ENCODE measurements at regions of chr9 and their contacts with region 1.

Region 1: GRCh38 chr9:30065883-30066282 is 2318.6 kb upstream of the ACO1 start:
- DNase-seq: no peak
- ATAC-seq: no peak
- H3K4me3 ChIP-seq: no peak overlapping the region
- H3K4me3 Mint-ChIP-seq: no peak overlapping the region
- H3K27ac ChIP-seq: no peak overlapping the region
- H3K27ac Mint-ChIP-seq: no peak overlapping the region
- H3K4me1 ChIP-seq: no peaks in the 10 kb centered on the region
- H3K4me1 Mint-ChIP-seq: no peaks in the 10 kb centered on the region
- H3K27me3 ChIP-seq: no peaks in the 10 kb centered on the region
- H3K27me3 Mint-ChIP-seq: no peaks in the 10 kb centered on the region

Region 2: GRCh38 chr9:30089428-30089827 is 23.5 kb after region 1 on chr9:
- CTCF ChIA-PET with region 1: no interaction called
- POLR2A ChIA-PET with region 1: no interaction called
- intact Hi-C with region 1: loop called in 1 of 2 experiments (anchors 2 kb)
- DNase-seq: no peak
- ATAC-seq: no peak
- H3K4me3 ChIP-seq: no peak overlapping the region
- H3K4me3 Mint-ChIP-seq: no peak overlapping the region
- H3K27ac ChIP-seq: no peak overlapping the region
- H3K27ac Mint-ChIP-seq: no peak overlapping the region
- H3K4me1 ChIP-seq: no peaks in the 10 kb centered on the region
- H3K4me1 Mint-ChIP-seq: no peaks in the 10 kb centered on the region
- H3K27me3 ChIP-seq: no peaks in the 10 kb centered on the region
- H3K27me3 Mint-ChIP-seq: no peaks in the 10 kb centered on the region

Region 3: DNA sequence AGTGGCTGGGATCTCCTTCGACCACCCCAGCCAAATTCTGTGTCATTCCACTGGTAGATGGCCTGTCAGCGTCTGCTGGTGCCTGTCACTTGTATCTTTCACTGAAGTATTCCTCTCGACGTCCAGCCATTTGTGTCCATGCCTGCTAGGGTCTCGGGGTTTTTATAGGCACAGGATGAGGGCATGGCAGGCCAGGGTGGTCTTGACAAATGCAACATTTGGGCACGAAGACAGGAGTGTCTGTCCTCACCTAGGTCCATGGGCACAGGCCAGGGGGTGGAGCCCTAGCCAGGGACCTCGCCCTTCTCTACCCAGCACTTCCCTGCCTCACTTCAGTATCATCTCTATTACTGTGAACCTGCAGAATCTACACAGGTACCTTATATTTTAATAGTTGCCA is 94.7 kb after region 1 on chr9:
- CTCF ChIA-PET with region 1: no interaction called
- POLR2A ChIA-PET with region 1: no interaction called
- intact Hi-C with region 1: no loop called
- DNase-seq: no peak
- ATAC-seq: no peak
- H3K4me3 ChIP-seq: no peak overlapping the region
- H3K4me3 Mint-ChIP-seq: no peak overlapping the region
- H3K27ac ChIP-seq: no peak overlapping the region
- H3K27ac Mint-ChIP-seq: no peak overlapping the region
- H3K4me1 ChIP-seq: no peaks in the 10 kb centered on the region
- H3K4me1 Mint-ChIP-seq: no peaks in the 10 kb centered on the region
- H3K27me3 ChIP-seq: no peaks in the 10 kb centered on the region
- H3K27me3 Mint-ChIP-seq: no peaks in the 10 kb centered on the region

Measured in naive thymus-derived CD4-positive, alpha-beta T cell (primary cell).